ENCODE measurements at regions of chr6 and their contacts with region 1.

Region 1: DNA sequence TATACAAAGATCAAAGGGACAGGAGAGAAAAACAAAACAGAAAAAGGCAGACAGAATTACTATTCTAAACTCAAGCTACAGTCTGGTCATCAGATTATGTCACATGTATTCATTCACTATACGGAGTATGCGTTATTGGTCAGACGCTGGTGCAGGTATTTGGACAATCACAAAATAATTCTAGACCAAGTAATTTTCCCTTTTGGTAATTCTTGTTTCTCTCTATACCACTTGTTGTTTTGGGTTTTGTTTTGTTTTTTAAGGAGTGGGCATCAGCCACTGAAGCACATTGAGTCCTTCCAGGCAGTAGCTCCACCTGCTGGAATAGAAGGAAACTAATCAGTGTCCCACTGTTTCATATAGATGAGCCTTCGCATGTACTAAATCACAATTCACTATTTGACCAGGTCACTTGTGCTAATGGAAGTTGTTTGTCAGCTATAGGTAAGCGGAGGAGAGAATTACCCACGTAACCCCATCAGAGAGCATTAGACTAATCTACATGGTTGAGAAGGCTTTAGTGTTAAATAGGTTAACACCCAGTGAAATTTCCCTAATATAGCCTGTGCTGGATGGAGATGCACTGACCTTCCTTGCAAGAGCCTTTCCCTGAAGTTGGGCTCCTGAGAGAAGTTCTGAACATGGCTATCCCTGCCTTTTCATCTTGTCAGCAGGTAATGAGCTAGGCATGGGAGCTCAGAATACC is 77.9 kb downstream of the TNFAIP3 start:
- DNase-seq: no peak
- H3K4me3 ChIP-seq: no peak overlapping the region
- CTCF ChIP-seq: peak; percentile 68

Region 2: GRCh38 chr6:137697267-137697938 is 247.5 kb before region 1 on chr6:
- CTCF ChIA-PET with region 1: interaction called, 53 read pairs
- POLR2A ChIA-PET with region 1: no interaction called
- DNase-seq: peak; percentile 12
- H3K4me3 ChIP-seq: no peak overlapping the region
- CTCF ChIP-seq: no peak

Region 3: DNA sequence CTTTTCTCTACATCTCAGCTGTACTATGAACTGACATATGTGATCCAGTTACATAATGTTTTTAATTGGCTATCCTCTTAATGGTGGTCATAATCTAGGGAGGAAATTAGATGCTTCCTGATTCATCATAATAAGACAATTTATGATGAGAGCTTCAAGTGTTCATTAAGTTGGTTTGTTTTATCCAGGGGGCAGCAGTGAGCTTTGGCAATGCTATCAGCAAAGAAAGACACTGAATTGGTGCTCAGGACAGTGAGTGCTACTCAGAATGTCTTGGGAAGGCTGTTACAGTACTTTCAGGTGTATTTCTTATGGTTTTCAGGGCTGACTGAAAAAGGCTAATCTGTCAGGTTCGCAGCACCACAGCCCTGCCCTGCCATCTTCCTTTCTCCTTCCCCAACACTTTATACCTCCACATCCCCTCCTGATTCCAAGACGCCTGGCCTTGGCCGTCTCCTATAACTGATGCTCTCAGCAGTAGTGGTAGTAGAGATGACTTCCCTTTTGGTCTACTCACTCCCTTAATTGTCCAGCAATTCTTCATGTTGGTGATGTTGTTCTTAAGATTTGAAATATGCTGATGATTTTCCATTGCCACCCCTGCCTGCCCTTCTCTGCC is 144.9 kb before region 1 on chr6:
- CTCF ChIA-PET with region 1: interaction called, 22 read pairs
- POLR2A ChIA-PET with region 1: no interaction called
- DNase-seq: no peak
- H3K4me3 ChIP-seq: no peak overlapping the region
- CTCF ChIP-seq: peak; percentile 35

Region 4: GRCh38 chr6:137878486-137879285 is 66.3 kb before region 1 on chr6:
- CTCF ChIA-PET with region 1: interaction called, 262 read pairs
- POLR2A ChIA-PET with region 1: no interaction called
- DNase-seq: no peak
- H3K4me3 ChIP-seq: no peak overlapping the region
- CTCF ChIP-seq: no peak

Region 5: GRCh38 chr6:137933696-137934095 is 11.2 kb before region 1 on chr6:
- CTCF ChIA-PET with region 1: interaction called, 40 read pairs
- POLR2A ChIA-PET with region 1: no interaction called
- DNase-seq: no peak
- H3K4me3 ChIP-seq: no peak overlapping the region
- CTCF ChIP-seq: no peak

Region 6: GRCh38 chr6:137967689-137968454 is 22.9 kb after region 1 on chr6:
- CTCF ChIA-PET with region 1: interaction called, 12 read pairs
- POLR2A ChIA-PET with region 1: no interaction called
- DNase-seq: no peak
- H3K4me3 ChIP-seq: no peak overlapping the region
- CTCF ChIP-seq: no peak

Measured in AG04449 (cell line).